Transverse colon (tissue), 4 donors: ENCODE measurements at regions of chr15 and their contacts with region 1.

Region 1: DNA sequence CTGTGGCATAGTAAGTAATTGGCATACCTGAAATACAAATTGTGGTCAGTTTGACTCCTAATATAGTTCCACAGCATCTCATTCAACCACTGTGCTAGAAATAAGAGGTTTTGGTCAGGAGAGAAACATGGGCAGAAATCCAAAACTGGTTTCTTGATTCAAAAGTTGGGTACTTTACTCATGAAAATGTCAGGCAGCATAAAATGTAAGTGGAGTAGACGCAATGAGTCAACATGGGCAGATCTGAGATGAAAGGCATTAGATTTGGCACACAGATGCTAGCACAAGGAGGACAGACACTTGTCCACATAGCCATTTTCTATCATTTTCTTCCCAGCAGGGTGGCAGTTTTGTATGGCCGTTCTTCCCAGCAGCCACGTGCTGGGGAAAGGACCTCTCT is 255.8 kb upstream of the CDIN1 start:
- DNase-seq: no peak
- H3K4me3 ChIP-seq: no peak overlapping the region
- H3K27ac ChIP-seq: no peak overlapping the region
- H3K4me1 ChIP-seq: no peaks in the 10 kb centered on the region
- H3K27me3 ChIP-seq: no peaks in the 10 kb centered on the region
- CTCF ChIP-seq: no peak
- EP300 ChIP-seq: no peak
- POLR2A ChIP-seq: no peak

Region 2: GRCh38 chr15:36161771-36162212 is 161.8 kb before region 1 on chr15:
- in situ Hi-C with region 1: no loop called
- intact Hi-C with region 1: no loop called
- DNase-seq: no peak
- H3K4me3 ChIP-seq: no peak overlapping the region
- H3K27ac ChIP-seq: no peak overlapping the region
- H3K4me1 ChIP-seq: no peaks in the 10 kb centered on the region
- H3K27me3 ChIP-seq: no peaks in the 10 kb centered on the region
- CTCF ChIP-seq: no peak
- EP300 ChIP-seq: no peak
- POLR2A ChIP-seq: no peak

Region 3: GRCh38 chr15:36347272-36347858 is 23.8 kb after region 1 on chr15:
- in situ Hi-C with region 1: no loop called
- intact Hi-C with region 1: loop called (anchors 1 kb)
- DNase-seq: no peak
- H3K4me3 ChIP-seq: no peak overlapping the region
- H3K27ac ChIP-seq: no peak overlapping the region
- H3K4me1 ChIP-seq: no peaks in the 10 kb centered on the region
- H3K27me3 ChIP-seq: no peaks in the 10 kb centered on the region
- CTCF ChIP-seq: no peak
- EP300 ChIP-seq: no peak
- POLR2A ChIP-seq: no peak

Region 4: DNA sequence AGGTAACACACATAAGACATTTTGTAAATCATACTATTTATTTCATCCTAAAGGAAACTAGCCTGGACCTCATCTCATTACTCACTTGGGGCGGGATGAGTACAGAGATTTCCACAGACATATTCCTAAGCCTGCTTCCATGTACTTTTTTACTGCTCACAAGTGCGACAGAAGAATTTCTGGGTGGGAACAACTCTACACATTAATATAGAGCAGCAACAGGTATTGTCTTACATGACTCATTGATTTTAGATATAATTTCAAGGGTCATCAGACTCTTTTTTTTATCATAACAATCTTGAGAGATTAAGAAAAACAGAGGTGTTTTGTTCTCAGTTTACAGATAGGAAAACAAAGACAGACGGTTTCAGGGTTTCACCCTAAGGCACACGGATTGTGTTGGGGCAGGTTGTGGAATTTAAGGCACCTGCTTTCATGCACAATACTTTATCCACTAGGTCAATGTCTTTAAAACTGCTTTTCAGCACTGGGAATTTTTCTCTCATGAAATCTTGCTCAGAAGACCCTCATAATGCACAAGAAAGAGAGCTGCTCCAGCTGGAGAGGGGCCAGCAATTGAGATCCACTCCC is 69.2 kb after region 1 on chr15:
- in situ Hi-C with region 1: no loop called
- intact Hi-C with region 1: loop called (anchors 10 kb)
- DNase-seq: no peak
- H3K4me3 ChIP-seq: no peak overlapping the region
- H3K27ac ChIP-seq: no peak overlapping the region
- H3K4me1 ChIP-seq: no peaks in the 10 kb centered on the region
- H3K27me3 ChIP-seq: no peaks in the 10 kb centered on the region
- CTCF ChIP-seq: no peak
- EP300 ChIP-seq: no peak
- POLR2A ChIP-seq: no peak